Common myeloid progenitor, CD34-positive (primary cell): ENCODE measurements at regions of chr1 and their contacts with region 1.

Region 1: DNA sequence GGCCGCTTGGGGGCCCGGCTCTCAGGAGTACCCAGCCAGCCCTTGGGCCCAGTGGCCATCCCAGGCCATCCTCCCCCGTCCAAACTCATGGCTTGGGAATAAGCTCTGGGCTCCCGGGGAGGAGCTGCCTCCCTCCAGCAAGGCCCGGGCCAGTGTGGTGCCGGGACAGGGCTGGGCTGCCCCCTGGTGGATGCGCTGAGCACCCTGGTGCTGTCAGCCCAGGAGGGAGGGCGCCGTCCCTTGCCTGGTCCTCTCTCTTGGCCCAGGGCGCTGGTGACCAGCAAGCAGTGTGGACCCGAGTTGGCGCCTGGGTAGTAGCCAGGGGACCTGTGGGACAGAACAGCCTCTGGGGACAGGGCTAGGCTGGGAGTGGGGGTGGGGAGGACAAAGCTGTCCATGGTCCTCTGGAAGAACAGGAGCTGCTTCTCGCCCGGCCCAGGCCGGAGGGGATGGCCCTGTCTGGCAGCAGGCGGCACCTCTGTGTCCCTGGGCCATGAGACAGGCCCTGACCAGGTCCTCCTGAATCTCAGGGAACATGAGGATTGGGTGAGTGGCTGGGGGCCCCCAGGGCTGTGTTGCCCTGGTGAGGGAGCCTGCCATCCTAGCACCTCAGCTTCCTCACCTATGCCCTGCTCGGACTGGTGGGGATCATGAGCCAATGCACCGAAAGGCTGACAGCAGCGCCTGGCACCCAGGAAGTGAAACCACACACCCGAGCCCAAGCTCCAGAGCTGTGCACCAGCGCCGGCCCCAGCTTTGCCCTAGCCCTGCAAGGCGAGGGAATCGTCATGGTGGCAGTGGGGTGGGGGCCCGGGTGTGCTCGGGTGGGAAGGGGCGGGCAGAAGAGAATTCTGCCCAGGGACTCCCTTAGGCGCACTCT is 9.4 kb downstream of the MORN1 start:
- DNase-seq: peak; percentile 50 to 69 (median 66)
- H3K4me3 ChIP-seq: no peak overlapping the region
- H3K27ac ChIP-seq: no peak overlapping the region
- H3K4me1 ChIP-seq: peaks cover 0 to 3% (median 1%) of the 10 kb centered on the region in 4 experiments
- H3K27me3 ChIP-seq: no peaks in the 10 kb centered on the region

Region 2: DNA sequence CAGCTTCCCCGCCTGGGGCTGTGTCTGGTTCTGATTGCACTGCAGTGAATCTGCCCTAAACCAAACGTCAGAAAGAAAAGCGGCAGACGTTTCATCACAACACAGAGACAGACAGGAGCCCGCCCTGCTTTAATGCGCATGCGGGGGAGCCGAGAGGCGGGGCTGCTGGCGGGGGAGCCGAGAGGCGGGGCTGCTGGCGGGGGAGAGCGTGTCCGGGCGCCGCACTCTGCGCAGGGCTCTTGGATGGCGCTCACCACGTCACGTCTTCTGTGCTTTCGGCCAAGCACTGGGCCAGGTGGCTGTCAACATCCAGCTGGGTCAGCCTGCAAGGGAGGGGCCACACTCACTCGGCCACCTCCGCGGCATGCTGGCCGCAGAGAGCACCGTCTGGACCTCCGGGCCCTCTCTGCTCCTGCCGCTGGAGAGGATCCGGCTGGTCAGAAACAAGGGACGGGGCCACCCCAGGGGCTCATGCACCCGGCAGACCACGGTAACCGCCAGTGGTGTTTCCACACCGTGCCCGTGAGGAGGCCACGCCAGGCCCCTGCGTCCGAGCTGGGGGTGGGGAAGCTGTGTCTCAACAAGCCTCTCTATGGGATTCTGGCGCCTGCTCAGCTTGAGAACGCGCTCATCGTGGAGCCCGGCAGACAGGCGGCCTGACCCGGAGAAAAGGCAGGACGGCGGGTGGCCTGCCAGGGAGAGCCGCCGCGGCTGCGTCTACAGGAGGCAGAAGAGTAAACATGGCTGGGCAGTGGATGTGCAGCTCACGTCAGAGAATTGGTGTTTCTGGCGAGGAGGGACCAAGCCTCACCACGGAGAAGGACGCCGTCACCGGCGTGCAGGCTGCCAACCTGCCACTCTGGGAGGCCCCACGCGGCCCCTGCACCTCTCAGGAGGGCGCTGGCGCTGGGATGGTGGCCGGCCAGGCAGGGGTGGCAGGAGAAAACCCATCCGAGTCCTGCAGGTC is 192.2 kb before region 1 on chr1:
- CTCF ChIA-PET with region 1: interaction called, 98 read pairs
- POLR2A ChIA-PET with region 1: interaction called, 12 read pairs
- DNase-seq: peak; percentile 78 to 91 (median 89)
- H3K4me3 ChIP-seq: peak overlapping the region in 6 of 7 experiments; percentile 19 to 81 (median 64)
- H3K27ac ChIP-seq: peak overlapping the region in 1 of 2 experiments; percentile 68
- H3K4me1 ChIP-seq: peaks cover 0 to 23% (median 17%) of the 10 kb centered on the region in 4 experiments
- H3K27me3 ChIP-seq: no peaks in the 10 kb centered on the region

Region 3: GRCh38 chr1:2194898-2195673 is 186.9 kb before region 1 on chr1:
- CTCF ChIA-PET with region 1: interaction called, 98 read pairs
- POLR2A ChIA-PET with region 1: interaction called, 12 read pairs
- DNase-seq: peak; percentile 78 to 88 (median 88)
- H3K4me3 ChIP-seq: peak overlapping the region; percentile 28 to 83 (median 67)
- H3K27ac ChIP-seq: peak overlapping the region; percentile 58 to 86
- H3K4me1 ChIP-seq: peaks cover 0 to 37% (median 35%) of the 10 kb centered on the region in 4 experiments
- H3K27me3 ChIP-seq: no peaks in the 10 kb centered on the region

Region 4: GRCh38 chr1:2267051-2267830 is 114.7 kb before region 1 on chr1:
- CTCF ChIA-PET with region 1: no interaction called
- POLR2A ChIA-PET with region 1: no interaction called
- DNase-seq: no peak
- H3K4me3 ChIP-seq: no peak overlapping the region
- H3K27ac ChIP-seq: no peak overlapping the region
- H3K4me1 ChIP-seq: peaks cover 0 to 19% (median 0%) of the 10 kb centered on the region in 4 experiments
- H3K27me3 ChIP-seq: no peaks in the 10 kb centered on the region

Region 5: GRCh38 chr1:2412519-2413233 is 30.7 kb after region 1 on chr1 and contains the start of gene PEX10:
- CTCF ChIA-PET with region 1: no interaction called
- POLR2A ChIA-PET with region 1: no interaction called
- DNase-seq: peak; percentile 94 to 97 (median 97)
- H3K4me3 ChIP-seq: peak within 1 kb of the TSS; percentile 79 to 94 (median 90)
- H3K27ac ChIP-seq: peak within 1 kb of the TSS; percentile 64 to 83
- H3K4me1 ChIP-seq: peaks cover 0 to 51% (median 50%) of the 10 kb centered on the region in 4 experiments
- H3K27me3 ChIP-seq: peaks cover 0 to 4% (median 0%) of the 10 kb centered on the region in 5 experiments

Region 6: GRCh38 chr1:2499986-2500596 is 118.1 kb after region 1 on chr1:
- CTCF ChIA-PET with region 1: no interaction called
- POLR2A ChIA-PET with region 1: no interaction called
- DNase-seq: peak; percentile 22 to 81 (median 66)
- H3K4me3 ChIP-seq: no peak overlapping the region
- H3K27ac ChIP-seq: no peak overlapping the region
- H3K4me1 ChIP-seq: peaks cover 0 to 16% (median 15%) of the 10 kb centered on the region in 4 experiments
- H3K27me3 ChIP-seq: peaks cover 0 to 19% (median 0%) of the 10 kb centered on the region in 5 experiments

Region 7: DNA sequence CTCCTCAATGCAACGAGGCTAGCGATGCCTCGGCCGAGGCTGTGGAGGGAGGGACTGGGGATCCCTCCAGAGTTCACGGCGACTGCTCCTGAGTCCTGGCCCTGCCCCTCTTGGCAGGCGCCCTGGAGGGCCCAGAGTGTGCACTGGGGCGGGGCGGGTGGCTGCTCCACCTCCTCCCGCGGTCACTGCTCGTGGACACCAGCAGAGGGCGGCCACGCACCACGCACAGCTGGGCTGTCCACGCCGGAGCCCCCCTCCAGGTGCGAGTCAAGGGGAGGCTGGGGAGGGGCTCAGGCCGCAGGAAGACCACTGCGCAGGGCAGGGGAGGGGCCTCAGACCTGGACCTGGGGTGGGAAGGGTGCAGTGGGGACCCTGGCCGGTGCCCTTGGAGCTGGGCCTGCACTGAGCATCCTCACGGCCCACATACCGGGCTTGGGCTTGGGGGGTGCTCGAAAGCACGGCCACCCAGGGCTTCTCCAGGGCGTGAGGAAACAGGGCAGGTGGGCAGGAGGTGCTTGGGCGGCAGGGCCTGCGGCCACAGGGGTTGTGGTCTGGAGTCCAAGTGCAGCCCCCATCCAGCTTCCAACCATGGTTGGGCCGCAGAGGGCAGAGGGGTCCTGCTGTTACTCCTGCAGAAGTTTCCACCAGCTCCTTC is 440.1 kb after region 1 on chr1:
- CTCF ChIA-PET with region 1: no interaction called
- POLR2A ChIA-PET with region 1: no interaction called
- DNase-seq: peak; percentile 43 to 63 (median 54)
- H3K4me3 ChIP-seq: no peak overlapping the region
- H3K27ac ChIP-seq: no peak overlapping the region
- H3K4me1 ChIP-seq: peaks cover 0 to 19% (median 13%) of the 10 kb centered on the region in 4 experiments
- H3K27me3 ChIP-seq: peaks cover 0 to 6% (median 0%) of the 10 kb centered on the region in 5 experiments